SK-N-SH (cell line): ENCODE measurements at regions of chr5 and their contacts with region 1.

Region 1: DNA sequence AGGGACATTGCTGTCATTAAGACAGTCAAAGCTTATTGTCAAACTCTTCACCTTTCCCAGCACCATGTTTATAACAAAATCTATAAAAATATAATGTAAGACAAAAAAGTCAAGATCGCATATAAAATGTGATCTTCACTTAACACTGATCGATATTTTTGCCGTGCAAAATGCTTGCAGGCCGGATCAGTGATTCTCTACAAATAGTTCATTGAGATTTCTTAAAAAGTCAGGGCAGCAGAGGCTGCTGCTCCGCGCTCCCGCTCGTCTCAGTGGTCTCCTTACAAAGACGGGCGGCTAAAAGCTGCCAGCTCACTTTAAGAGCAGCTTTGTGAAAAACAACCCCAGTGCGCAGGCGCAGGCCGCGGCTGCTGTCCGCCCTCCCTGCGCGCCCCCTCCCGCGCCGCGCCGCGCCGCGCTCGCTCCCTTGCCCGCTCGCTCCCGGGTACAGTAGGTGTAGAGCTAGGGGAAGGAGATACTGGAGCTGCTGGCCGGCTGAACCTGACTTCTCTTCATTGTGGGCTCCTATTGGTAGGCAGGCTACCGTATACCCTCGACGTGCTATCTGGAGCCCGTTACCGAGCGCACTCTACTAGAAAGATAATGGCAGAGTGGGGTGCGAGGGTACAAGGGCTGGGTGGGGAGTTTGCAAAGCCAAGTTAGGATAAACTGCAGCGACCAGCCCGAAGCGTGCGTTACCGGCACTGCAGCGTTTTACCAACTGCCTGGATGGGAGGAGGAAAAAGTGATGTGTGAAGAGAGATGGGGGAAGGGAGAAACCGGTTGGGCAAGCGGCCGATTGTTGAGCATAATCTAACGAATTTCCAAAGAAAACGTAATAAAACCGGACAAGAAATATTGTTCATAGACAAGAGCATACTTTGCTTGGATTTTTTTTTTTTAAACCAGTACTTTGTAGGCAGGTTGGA is at the start of gene ARRDC3:
- DNase-seq: peak; percentile 87
- H3K4me3 ChIP-seq: peak within 1 kb of the TSS; percentile 89 to 94
- H3K27ac ChIP-seq: peak within 1 kb of the TSS; percentile 100
- H3K4me1 ChIP-seq: peaks cover 1 to 5% of the 10 kb centered on the region in 2 experiments; a peak in 2 of 4 replicates
- H3K27me3 ChIP-seq: no peaks in the 10 kb centered on the region
- CTCF ChIP-seq: no peak
- EP300 ChIP-seq: peak; percentile 9 to 46; a peak in 2 of 4 replicates
- RAD21 ChIP-seq: peak; percentile 1; the same call in 1 of the 2 replicates
- polyA plus RNA-seq, gene ARRDC3: 24.6 and 26.0 TPM in 2 replicates

Region 2: GRCh38 chr5:90932052-90932699 is 451.1 kb before region 1 on chr5:
- CTCF ChIA-PET with region 1: interaction called, 128 read pairs
- POLR2A ChIA-PET with region 1: interaction called, 5 read pairs
- DNase-seq: peak; percentile 77
- H3K4me3 ChIP-seq: no peak overlapping the region; a peak in 1 of 4 replicates
- H3K27ac ChIP-seq: no peak overlapping the region
- H3K4me1 ChIP-seq: no peaks in the 10 kb centered on the region; a peak in 2 of 4 replicates
- H3K27me3 ChIP-seq: no peaks in the 10 kb centered on the region
- CTCF ChIP-seq: peak; percentile 85
- EP300 ChIP-seq: 0 out of 4 replicates have a peak, but pooled peaks of 1 of the 2 experiments have one; percentile 30
- RAD21 ChIP-seq: peak; percentile 96

Region 3: GRCh38 chr5:91101600-91102379 is 281.5 kb before region 1 on chr5:
- CTCF ChIA-PET with region 1: interaction called, 62 read pairs
- POLR2A ChIA-PET with region 1: interaction called, 4 read pairs
- DNase-seq: peak; percentile 71
- H3K4me3 ChIP-seq: no peak overlapping the region
- H3K27ac ChIP-seq: peak overlapping the region; percentile 11 to 39; a peak in 2 of 4 replicates
- H3K4me1 ChIP-seq: peaks cover 0 to 2% of the 10 kb centered on the region in 2 experiments; a peak in 1 of 4 replicates
- H3K27me3 ChIP-seq: no peaks in the 10 kb centered on the region
- CTCF ChIP-seq: peak; percentile 82
- EP300 ChIP-seq: peak in 1 of 2 experiments; percentile 16; a peak in 1 of 4 replicates
- RAD21 ChIP-seq: peak; percentile 96

Region 4: GRCh38 chr5:91225848-91226686 is 157.2 kb before region 1 on chr5:
- CTCF ChIA-PET with region 1: interaction called, 42 read pairs
- POLR2A ChIA-PET with region 1: interaction called, 4 read pairs
- DNase-seq: no peak
- H3K4me3 ChIP-seq: no peak overlapping the region
- H3K27ac ChIP-seq: no peak overlapping the region
- H3K4me1 ChIP-seq: peaks cover 0 to 4% of the 10 kb centered on the region in 2 experiments; a peak in 1 of 4 replicates
- H3K27me3 ChIP-seq: no peaks in the 10 kb centered on the region
- CTCF ChIP-seq: peak; percentile 37
- EP300 ChIP-seq: no peak
- RAD21 ChIP-seq: peak; percentile 68

Region 5: DNA sequence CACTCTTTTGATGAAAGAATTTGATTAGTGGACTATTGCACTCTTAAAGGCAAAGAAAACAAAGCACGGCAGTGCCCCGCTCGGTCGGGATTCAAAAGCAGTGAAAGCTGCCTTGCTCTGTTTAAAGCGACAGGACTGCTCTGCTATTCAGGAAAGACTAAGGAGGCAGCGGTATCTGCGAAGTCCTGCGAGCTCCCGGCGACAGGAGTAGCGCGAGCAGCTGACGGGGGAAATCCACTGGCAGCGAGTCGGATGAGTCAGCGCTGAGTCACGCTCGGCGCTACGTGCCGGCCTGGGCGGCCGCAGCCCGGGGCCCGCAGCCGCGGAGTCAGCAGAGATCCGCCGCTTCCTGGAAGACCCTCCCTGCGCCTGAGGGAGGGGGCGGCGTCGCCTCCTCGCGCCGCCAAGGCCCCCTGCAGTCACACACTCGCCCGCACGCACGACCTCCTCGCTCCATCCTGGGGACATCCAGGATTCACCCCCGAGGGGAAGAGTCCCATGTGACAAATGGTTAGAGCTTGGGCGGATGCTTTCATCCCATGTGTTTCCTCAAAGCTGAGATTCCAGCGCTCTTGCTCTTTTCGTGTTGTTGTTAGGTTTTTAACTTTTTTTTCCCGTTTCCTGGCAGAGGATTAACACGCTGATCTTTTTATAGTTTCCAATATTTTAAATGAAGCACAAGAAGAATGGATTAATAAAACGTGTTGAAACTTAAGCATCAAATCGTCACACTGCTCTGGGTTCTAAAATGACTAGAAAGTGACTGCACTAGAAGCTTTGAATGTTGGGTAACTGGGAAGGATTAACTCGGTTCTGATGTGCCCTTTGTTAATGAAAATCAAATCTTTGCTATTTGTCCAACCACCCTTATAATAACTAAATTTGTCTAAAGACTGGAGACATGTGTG is 102.7 kb before region 1 on chr5:
- CTCF ChIA-PET with region 1: interaction called, 19 read pairs
- POLR2A ChIA-PET with region 1: interaction called, 19 read pairs
- DNase-seq: peak; percentile 91
- H3K4me3 ChIP-seq: peak overlapping the region; percentile 50 to 58
- H3K27ac ChIP-seq: peak overlapping the region; percentile 94 to 98
- H3K4me1 ChIP-seq: peaks cover 10 to 24% of the 10 kb centered on the region in 2 experiments
- H3K27me3 ChIP-seq: no peaks in the 10 kb centered on the region
- CTCF ChIP-seq: 0 out of 2 replicates have a peak, but pooled peaks have one; percentile 9
- EP300 ChIP-seq: peak; percentile 56 to 82; a peak in 3 of 4 replicates
- RAD21 ChIP-seq: no peak; the same call in none of the 2 replicates

Region 6: DNA sequence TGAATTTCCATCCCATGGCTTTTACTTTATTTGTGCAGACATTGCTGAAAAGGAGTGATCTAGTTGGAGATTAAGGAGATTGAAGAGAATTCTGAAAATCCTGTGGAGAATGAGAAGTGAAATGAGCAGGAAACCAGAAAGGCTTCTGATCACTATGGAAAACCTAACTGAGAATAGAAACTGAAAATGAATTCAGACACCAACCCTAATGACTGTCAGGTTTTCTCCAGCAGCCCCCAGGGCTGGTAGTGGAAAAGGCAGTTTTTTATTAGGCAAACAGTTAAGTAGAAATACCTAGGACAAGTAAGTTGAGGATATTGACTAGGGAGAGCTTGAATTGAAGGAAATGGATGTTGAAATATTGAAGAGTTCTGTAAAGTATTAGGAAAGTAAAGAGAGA is 14.5 kb after region 1 on chr5:
- CTCF ChIA-PET with region 1: interaction called, 23 read pairs
- POLR2A ChIA-PET with region 1: interaction called, 4 read pairs
- DNase-seq: no peak
- H3K4me3 ChIP-seq: no peak overlapping the region
- H3K27ac ChIP-seq: no peak overlapping the region
- H3K4me1 ChIP-seq: no peaks in the 10 kb centered on the region; a peak in 1 of 4 replicates
- H3K27me3 ChIP-seq: no peaks in the 10 kb centered on the region
- CTCF ChIP-seq: no peak
- EP300 ChIP-seq: no peak
- RAD21 ChIP-seq: no peak